ENCODE measurements at regions of chr18 and their contacts with region 1.

Region 1: GRCh38 chr18:37322492-37323035 is 243.0 kb downstream of the CELF4 start:
- DNase-seq: peak; percentile 92

Region 2: DNA sequence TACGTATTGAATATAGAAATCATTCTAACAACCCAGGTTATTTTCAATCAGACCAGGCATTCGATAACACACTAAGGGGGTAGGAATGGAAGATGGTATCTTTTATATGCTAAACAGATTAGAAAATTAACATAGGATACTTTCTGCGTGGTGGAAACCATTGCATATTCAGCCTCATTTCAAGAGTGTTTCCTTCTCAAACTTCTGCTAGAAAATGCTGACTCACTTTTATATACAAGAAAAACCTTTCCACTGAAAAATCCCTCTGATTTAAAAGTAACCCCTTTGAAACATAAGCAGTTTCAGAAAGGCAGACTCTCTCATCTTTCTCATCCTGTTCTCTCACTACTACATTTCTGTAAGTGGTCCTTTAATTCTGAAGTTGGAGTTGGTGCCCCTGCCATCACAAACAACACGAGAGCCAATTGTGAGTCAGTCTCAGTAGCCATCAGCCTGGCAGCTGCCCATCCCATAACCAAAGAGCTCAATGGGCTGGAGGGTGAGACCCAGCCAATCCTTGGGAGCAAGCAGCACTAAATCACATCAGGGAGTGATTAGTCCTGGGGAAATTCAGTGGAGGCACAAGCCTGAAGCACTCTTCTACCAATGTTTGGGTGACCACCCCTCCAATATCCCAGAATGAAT is 100.1 kb before region 1 on chr18:
- CTCF ChIA-PET with region 1: no interaction called
- POLR2A ChIA-PET with region 1: no interaction called
- DNase-seq: no peak

Region 3: GRCh38 chr18:37309055-37309454 is 13.5 kb before region 1 on chr18:
- CTCF ChIA-PET with region 1: interaction called, 32 read pairs
- POLR2A ChIA-PET with region 1: no interaction called
- DNase-seq: no peak

Region 4: DNA sequence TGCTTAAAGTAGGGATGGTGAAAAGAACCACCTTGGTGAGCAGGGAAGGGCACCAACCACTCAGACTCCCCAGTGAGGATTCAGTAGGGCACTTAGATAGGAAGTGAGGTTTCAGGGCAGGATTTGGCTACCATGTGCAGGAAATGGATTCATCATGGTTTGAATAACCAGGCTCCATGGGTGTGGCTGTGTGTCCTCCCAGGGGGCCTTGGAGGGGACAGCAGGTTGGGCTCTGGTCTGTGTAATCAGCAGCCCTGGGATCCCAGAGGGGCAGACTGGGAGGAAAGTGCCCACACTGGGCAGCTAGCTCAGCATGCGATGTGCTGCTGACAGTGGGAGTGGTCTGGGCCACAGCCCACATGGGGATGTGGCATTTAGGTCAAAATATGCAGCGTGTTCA is 18.5 kb after region 1 on chr18:
- CTCF ChIA-PET with region 1: interaction called, 31 read pairs
- POLR2A ChIA-PET with region 1: interaction called, 3 read pairs
- DNase-seq: no peak